AG04450 (cell line): ENCODE measurements at regions of chr17 and their contacts with region 1.

Region 1: DNA sequence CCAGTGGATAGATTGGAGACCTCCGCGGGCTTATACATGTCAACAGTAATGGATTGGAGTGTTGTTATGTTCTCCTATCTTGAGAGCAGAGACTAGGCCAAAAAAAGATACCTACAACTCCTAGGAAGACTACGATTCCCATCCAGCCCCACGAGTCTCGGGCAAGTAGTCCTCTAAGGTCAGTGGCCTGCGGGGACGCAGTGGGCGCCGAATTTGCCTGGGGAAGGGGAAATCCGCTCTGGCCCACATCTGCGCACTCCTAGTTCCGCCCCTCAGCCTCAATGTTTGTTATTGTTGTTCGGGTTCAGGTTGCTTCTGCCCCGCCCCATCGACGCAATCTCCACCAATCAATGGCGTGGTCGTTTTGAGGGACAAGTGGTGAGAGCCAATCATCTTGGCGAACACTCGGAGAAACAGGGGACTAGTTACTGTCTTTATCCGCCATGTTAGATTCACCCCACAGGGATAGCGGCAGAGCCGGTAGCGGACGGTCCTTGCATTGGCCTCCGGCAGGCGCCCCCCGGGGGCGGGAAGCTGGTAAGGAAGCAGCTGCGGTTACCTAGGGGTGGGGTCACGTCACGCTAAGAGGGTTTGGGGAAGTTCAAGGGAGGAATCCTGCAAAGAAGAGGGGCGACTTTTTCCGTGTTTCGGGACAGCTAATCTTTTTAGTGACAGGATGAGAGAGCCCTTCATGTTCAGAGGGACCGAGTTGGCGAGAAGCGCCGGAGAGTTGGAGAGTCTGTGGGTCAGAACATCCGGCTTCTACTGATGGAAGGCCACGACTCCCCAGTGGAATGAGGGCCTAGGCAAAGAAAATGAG is at the start of gene NBR1:
- DNase-seq: peak; percentile 95
- H3K4me3 ChIP-seq: peak within 1 kb of the TSS; percentile 80
- H3K27ac ChIP-seq: peak within 1 kb of the TSS; percentile 91
- H3K27me3 ChIP-seq: no peaks in the 10 kb centered on the region
- CTCF ChIP-seq: peak; percentile 29; the same call in 1 of the 2 replicates
- polyA plus RNA-seq, gene NBR1: 103 and 107 TPM in 2 replicates

Region 2: GRCh38 chr17:43024407-43025289 is 146.3 kb before region 1 on chr17 and contains the start of gene RND2:
- CTCF ChIA-PET with region 1: interaction called, 13 read pairs
- POLR2A ChIA-PET with region 1: interaction called, 19 read pairs
- DNase-seq: peak; percentile 84
- H3K4me3 ChIP-seq: peak within 1 kb of the TSS; percentile 72
- H3K27ac ChIP-seq: peak within 1 kb of the TSS; percentile 33
- H3K27me3 ChIP-seq: peaks cover 4% of the 10 kb centered on the region
- CTCF ChIP-seq: peak; percentile 87
- polyA plus RNA-seq, gene RND2: 1.7 and 2.1 TPM in 2 replicates

Region 3: DNA sequence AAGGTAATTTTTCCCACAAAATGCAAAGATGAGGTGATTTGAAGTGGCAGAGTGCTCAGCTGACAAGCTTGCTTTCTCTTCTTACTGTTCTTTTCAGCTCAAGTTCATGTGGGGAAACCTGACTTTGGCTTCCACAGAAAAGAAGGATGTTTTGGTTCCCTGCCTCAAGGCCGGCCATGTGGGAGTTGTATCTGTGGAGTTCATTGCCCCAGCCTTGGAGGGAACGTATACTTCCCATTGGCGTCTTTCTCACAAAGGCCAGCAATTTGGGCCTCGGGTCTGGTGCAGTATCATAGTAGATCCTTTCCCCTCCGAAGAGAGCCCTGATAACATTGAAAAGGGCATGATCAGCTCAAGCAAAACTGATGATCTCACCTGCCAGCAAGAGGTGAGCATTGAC is 22.3 kb after region 1 on chr17:
- CTCF ChIA-PET with region 1: no interaction called
- POLR2A ChIA-PET with region 1: interaction called, 13 read pairs
- DNase-seq: no peak
- H3K4me3 ChIP-seq: no peak overlapping the region
- H3K27ac ChIP-seq: no peak overlapping the region
- H3K27me3 ChIP-seq: no peaks in the 10 kb centered on the region
- CTCF ChIP-seq: no peak